IMR-90 (cell line): ENCODE measurements at regions of chr16 and their contacts with region 1.

Region 1: GRCh38 chr16:48156790-48157209 is 1.0 kb upstream of the ABCC12 start:
- DNase-seq: peak; percentile 85
- ATAC-seq: peak; percentile 85
- H3K4me3 ChIP-seq: no peak overlapping the region
- H3K27ac ChIP-seq: no peak overlapping the region
- H3K4me1 ChIP-seq: peaks cover 2% of the 10 kb centered on the region
- H3K27me3 ChIP-seq: no peaks in the 10 kb centered on the region
- CTCF ChIP-seq: peak; percentile 96
- POLR2A ChIP-seq: peak; percentile 50; the same call in 1 of the 2 replicates
- RAD21 ChIP-seq: peak; percentile 98

Region 2: GRCh38 chr16:47037746-47038458 is 1118.9 kb before region 1 on chr16:
- CTCF ChIA-PET with region 1: no interaction called
- POLR2A ChIA-PET with region 1: no interaction called
- dilution Hi-C with region 1: no loop called
- in situ Hi-C with region 1: no loop called
- intact Hi-C with region 1: loop called (anchors 2 kb)
- DNase-seq: peak; percentile 62
- ATAC-seq: peak; percentile 99
- H3K4me3 ChIP-seq: peak overlapping the region; percentile 74
- H3K27ac ChIP-seq: peak overlapping the region; percentile 62
- H3K4me1 ChIP-seq: no peaks in the 10 kb centered on the region
- H3K27me3 ChIP-seq: peaks cover 4% of the 10 kb centered on the region
- CTCF ChIP-seq: peak; percentile 92
- POLR2A ChIP-seq: no peak
- RAD21 ChIP-seq: peak; percentile 75

Region 3: GRCh38 chr16:47460711-47461597 is 695.8 kb before region 1 on chr16 and contains the starts of genes ITFG1 and PHKB:
- CTCF ChIA-PET with region 1: no interaction called
- POLR2A ChIA-PET with region 1: no interaction called
- dilution Hi-C with region 1: no loop called
- in situ Hi-C with region 1: loop called (anchors 25 kb)
- intact Hi-C with region 1: loop called (anchors 1 kb)
- DNase-seq: peak; percentile 90
- ATAC-seq: peak; percentile 95
- H3K4me3 ChIP-seq: peak within 1 kb of the TSS; percentile 84
- H3K27ac ChIP-seq: peak within 1 kb of the TSS; percentile 87
- H3K4me1 ChIP-seq: peaks cover 4% of the 10 kb centered on the region; the same call in 1 of the 2 replicates
- H3K27me3 ChIP-seq: no peaks in the 10 kb centered on the region
- CTCF ChIP-seq: peak; percentile 19; the same call in 1 of the 2 replicates
- POLR2A ChIP-seq: peak; percentile 83
- RAD21 ChIP-seq: no peak; the same call in none of the 2 replicates
- total RNA-seq, gene ITFG1: 57.5 and 60.4 TPM in 2 replicates
- total RNA-seq, gene PHKB: 58.6 and 60.0 TPM in 2 replicates

Region 4: GRCh38 chr16:47699106-47699505 is 457.7 kb before region 1 on chr16:
- CTCF ChIA-PET with region 1: no interaction called
- POLR2A ChIA-PET with region 1: no interaction called
- dilution Hi-C with region 1: no loop called
- in situ Hi-C with region 1: no loop called
- intact Hi-C with region 1: loop called (anchors 10 kb)
- DNase-seq: no peak
- ATAC-seq: no peak
- H3K4me3 ChIP-seq: no peak overlapping the region
- H3K27ac ChIP-seq: no peak overlapping the region
- H3K4me1 ChIP-seq: no peaks in the 10 kb centered on the region
- H3K27me3 ChIP-seq: no peaks in the 10 kb centered on the region
- CTCF ChIP-seq: no peak
- POLR2A ChIP-seq: no peak
- RAD21 ChIP-seq: no peak

Region 5: GRCh38 chr16:47888142-47888541 is 268.7 kb before region 1 on chr16:
- CTCF ChIA-PET with region 1: no interaction called
- POLR2A ChIA-PET with region 1: no interaction called
- dilution Hi-C with region 1: no loop called
- in situ Hi-C with region 1: no loop called
- intact Hi-C with region 1: loop called (anchors 10 kb)
- DNase-seq: peak; percentile 49
- ATAC-seq: peak; percentile 71
- H3K4me3 ChIP-seq: no peak overlapping the region
- H3K27ac ChIP-seq: no peak overlapping the region
- H3K4me1 ChIP-seq: peaks cover 6% of the 10 kb centered on the region
- H3K27me3 ChIP-seq: no peaks in the 10 kb centered on the region
- CTCF ChIP-seq: no peak
- POLR2A ChIP-seq: no peak
- RAD21 ChIP-seq: no peak

Region 6: DNA sequence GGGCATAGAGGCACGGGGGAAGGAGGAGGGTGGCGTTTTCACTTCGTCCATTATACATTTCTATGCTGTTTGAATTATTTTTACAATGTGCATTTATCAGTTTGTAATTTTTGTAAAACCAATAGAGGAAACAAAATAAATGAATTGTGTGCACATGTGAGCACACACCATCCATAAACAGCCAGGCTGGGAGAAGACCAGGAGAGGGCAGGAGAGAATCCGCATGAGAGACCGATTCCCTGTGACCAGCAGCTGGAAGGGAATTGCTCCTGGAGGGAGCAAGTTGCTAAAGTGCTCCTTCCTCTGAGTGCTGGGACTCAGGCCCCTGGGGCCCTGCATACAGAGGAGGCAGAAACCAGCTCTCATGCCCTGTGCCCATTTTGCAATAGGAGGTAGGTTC is 127.0 kb before region 1 on chr16:
- CTCF ChIA-PET with region 1: no interaction called
- POLR2A ChIA-PET with region 1: no interaction called
- dilution Hi-C with region 1: no loop called
- in situ Hi-C with region 1: no loop called
- intact Hi-C with region 1: loop called (anchors 5 kb)
- DNase-seq: no peak
- ATAC-seq: peak; percentile 40; the same call in 1 of the 2 replicates
- H3K4me3 ChIP-seq: no peak overlapping the region
- H3K27ac ChIP-seq: no peak overlapping the region
- H3K4me1 ChIP-seq: no peaks in the 10 kb centered on the region
- H3K27me3 ChIP-seq: peaks cover 14% of the 10 kb centered on the region
- CTCF ChIP-seq: 0 out of 2 replicates have a peak, but pooled peaks have one; percentile 11
- POLR2A ChIP-seq: no peak
- RAD21 ChIP-seq: 0 out of 2 replicates have a peak, but pooled peaks have one; percentile 5

Region 7: DNA sequence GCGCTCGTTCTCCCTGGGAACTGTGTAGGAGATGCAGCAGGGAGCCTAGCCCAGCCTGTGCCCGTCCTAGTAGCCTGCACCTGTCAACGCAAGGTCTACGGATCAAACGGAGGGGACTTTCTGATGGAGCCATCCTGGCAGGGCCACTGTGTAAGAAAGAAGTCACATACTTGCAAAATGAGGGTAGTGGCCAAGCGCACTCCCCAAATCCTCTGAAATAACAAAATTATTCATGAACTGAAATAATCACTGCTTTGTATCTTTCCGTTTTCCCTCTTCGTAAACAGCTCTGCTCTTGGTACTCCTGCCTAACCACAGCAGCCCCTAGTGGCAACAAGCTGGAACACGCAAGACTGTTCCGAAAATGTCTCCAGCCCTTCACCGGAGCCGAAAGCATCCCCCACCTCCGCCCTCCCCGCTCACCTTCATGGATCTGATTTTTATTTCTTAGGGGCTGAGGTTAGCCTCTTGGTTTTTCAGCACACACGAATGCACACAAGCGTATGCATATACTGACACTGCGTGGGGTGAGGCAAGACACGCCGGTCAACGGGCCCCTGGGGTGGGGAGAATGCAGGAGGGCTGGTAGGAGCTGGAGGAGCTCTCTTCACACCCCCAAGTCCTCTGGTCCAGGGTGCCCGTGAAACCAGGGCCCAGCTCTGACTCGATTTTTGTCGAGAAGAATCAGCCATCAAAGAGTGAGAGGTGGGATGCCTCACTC is 101.8 kb before region 1 on chr16:
- CTCF ChIA-PET with region 1: no interaction called
- POLR2A ChIA-PET with region 1: no interaction called
- dilution Hi-C with region 1: no loop called
- in situ Hi-C with region 1: loop called (anchors 5 kb)
- intact Hi-C with region 1: loop called (anchors 2 kb)
- DNase-seq: peak; percentile 71
- ATAC-seq: peak; percentile 83
- H3K4me3 ChIP-seq: no peak overlapping the region
- H3K27ac ChIP-seq: no peak overlapping the region
- H3K4me1 ChIP-seq: peaks cover 6% of the 10 kb centered on the region
- H3K27me3 ChIP-seq: no peaks in the 10 kb centered on the region
- CTCF ChIP-seq: peak; percentile 91
- POLR2A ChIP-seq: no peak
- RAD21 ChIP-seq: peak; percentile 88